MCF 10A (cell line): ENCODE measurements at regions of chr2 and their contacts with region 1.

Region 1: DNA sequence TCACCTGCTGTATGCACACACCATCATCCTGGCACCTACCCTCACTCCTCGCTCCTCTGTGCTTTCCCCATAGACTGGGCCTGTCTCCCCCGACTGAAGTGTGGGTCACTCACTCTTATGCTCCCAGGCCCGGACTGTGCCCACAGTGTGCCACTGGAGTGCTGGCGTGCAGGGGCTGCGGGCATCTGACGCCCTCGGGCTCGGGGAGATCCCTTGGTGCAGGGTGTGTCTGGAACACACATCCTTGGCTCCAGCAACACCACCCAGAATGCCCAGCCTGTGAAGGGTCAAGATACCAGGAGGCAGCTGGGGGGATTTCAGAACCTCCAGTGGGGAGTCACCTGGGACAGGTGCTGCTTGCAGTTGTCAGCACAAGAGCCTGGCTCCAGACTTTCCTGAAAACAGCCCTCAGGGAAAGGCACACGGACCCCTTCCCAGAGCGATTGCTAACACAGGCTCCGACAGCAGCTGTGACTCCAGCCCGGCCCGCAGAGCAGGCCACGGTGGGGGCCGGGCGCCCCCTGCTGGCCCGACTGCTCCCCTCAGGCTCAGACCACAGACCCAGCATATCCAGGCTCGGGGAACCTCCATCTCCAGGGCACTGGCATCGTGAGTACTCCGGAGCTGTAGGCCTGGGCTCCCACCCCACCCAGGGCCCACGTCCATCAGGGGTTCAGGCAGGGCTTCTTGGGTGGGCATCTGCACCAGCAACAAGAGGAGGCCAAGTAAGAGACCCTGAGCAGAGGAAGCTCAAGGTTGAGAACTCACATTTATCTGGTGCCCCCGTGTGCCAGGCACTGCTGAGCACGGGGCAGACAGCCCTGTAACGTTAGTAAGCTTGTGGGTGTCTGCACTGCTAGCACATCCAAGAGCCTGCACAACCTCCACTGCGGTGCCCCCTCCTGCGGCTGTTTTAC is 8.6 kb downstream of the HS1BP3 start:
- DNase-seq: peak; percentile 70
- H3K4me3 Mint-ChIP-seq: no peak overlapping the region
- H3K27ac Mint-ChIP-seq: no peak overlapping the region
- H3K4me1 Mint-ChIP-seq: peaks cover 17% of the 10 kb centered on the region
- H3K27me3 Mint-ChIP-seq: no peaks in the 10 kb centered on the region
- CTCF ChIP-seq: peak; percentile 91

Region 2: DNA sequence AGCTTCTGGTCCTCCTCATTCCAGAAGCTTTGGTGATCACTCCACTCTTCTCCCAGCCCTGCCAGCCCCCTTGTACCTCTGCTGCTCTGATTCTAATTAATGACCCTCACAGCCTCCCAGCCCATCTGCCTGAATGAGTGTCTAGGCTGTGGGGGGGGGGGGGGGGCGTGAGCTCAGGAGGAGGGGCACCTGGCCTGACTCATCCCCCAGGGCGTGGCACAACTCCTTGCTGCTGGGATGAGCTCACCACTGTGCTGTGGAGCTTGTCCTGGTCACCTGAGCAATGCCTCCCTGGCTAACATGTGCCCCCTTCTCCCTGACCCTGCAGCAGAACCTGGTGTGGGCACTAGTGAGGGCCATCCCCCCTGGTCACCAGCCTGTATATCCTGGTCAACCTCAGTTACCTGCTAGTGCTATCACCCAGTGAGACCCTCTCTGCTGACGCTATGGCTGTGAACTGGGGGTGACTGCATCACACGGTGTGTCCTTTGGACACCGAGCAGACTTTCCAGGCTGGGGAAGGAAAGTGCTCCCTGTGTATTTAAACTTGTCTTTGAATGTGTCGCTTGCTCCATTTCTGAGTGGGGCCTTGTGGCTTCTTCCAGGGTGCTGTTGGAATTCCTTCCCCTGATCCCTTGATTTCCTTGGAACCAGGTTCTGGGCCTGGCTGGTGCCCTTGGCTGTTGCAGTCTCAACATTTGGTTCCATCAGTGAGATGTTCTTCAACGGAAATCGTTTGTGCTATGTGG is 250.2 kb before region 1 on chr2:
- CTCF ChIA-PET with region 1: interaction called, 78 read pairs
- POLR2A ChIA-PET with region 1: no interaction called
- intact Hi-C with region 1: loop called (anchors 1 kb)
- DNase-seq: peak; percentile 61
- H3K4me3 Mint-ChIP-seq: no peak overlapping the region
- H3K27ac Mint-ChIP-seq: no peak overlapping the region
- H3K4me1 Mint-ChIP-seq: peaks cover 11% of the 10 kb centered on the region
- H3K27me3 Mint-ChIP-seq: no peaks in the 10 kb centered on the region
- CTCF ChIP-seq: no peak

Region 3: GRCh38 chr2:20424300-20425290 is 217.7 kb before region 1 on chr2:
- CTCF ChIA-PET with region 1: interaction called, 15 read pairs
- POLR2A ChIA-PET with region 1: no interaction called
- intact Hi-C with region 1: no loop called
- DNase-seq: peak; percentile 61
- H3K4me3 Mint-ChIP-seq: no peak overlapping the region
- H3K27ac Mint-ChIP-seq: peak overlapping the region; percentile 67
- H3K4me1 Mint-ChIP-seq: peaks cover 47% of the 10 kb centered on the region
- H3K27me3 Mint-ChIP-seq: no peaks in the 10 kb centered on the region
- CTCF ChIP-seq: no peak

Region 4: GRCh38 chr2:20507166-20507692 is 135.1 kb before region 1 on chr2:
- CTCF ChIA-PET with region 1: interaction called, 10 read pairs
- POLR2A ChIA-PET with region 1: no interaction called
- intact Hi-C with region 1: no loop called
- DNase-seq: no peak
- H3K4me3 Mint-ChIP-seq: no peak overlapping the region
- H3K27ac Mint-ChIP-seq: no peak overlapping the region
- H3K4me1 Mint-ChIP-seq: peaks cover 35% of the 10 kb centered on the region
- H3K27me3 Mint-ChIP-seq: no peaks in the 10 kb centered on the region
- CTCF ChIP-seq: no peak

Region 5: GRCh38 chr2:21104030-21104660 is 461.8 kb after region 1 on chr2:
- CTCF ChIA-PET with region 1: no interaction called
- POLR2A ChIA-PET with region 1: no interaction called
- intact Hi-C with region 1: no loop called
- DNase-seq: no peak
- H3K4me3 Mint-ChIP-seq: no peak overlapping the region
- H3K27ac Mint-ChIP-seq: no peak overlapping the region
- H3K4me1 Mint-ChIP-seq: no peaks in the 10 kb centered on the region
- H3K27me3 Mint-ChIP-seq: peaks cover 36% of the 10 kb centered on the region
- CTCF ChIP-seq: no peak